ENCODE measurements at regions of chr6 and their contacts with region 1.

Region 1: DNA sequence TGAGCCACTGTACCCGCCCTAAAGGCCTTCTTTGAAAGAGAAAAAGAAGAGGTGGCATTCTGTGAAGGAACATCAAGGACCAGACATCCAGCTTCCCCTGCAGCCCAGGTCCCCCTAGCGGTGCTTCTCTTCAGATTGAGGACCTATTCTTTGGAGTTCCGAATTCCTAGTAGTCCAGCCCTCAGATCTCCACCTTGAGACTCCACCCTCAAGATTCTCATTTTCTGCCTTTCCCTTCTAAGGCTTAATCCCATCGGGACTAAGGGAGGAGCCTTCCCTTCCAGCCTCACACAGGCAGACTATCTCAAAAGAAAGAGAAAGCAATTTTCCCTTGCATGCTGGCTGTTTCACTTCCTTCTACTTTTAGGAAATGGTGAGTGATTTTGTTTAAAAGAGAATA is 32.5 kb downstream of the MUC22 start:
- DNase-seq: peak; percentile 56
- ATAC-seq: peak; percentile 64
- H3K4me3 ChIP-seq: no peak overlapping the region
- H3K27ac ChIP-seq: no peak overlapping the region
- H3K4me1 ChIP-seq: peaks cover 12% of the 10 kb centered on the region
- H3K27me3 ChIP-seq: peaks cover 0 to 26% of the 10 kb centered on the region in 2 experiments; a peak in 3 of 5 replicates
- CTCF ChIP-seq: peak; percentile 75
- EP300 ChIP-seq: no peak
- POLR2A ChIP-seq: no peak
- RAD21 ChIP-seq: 0 out of 2 replicates have a peak, but pooled peaks have one; percentile 48

Region 2: DNA sequence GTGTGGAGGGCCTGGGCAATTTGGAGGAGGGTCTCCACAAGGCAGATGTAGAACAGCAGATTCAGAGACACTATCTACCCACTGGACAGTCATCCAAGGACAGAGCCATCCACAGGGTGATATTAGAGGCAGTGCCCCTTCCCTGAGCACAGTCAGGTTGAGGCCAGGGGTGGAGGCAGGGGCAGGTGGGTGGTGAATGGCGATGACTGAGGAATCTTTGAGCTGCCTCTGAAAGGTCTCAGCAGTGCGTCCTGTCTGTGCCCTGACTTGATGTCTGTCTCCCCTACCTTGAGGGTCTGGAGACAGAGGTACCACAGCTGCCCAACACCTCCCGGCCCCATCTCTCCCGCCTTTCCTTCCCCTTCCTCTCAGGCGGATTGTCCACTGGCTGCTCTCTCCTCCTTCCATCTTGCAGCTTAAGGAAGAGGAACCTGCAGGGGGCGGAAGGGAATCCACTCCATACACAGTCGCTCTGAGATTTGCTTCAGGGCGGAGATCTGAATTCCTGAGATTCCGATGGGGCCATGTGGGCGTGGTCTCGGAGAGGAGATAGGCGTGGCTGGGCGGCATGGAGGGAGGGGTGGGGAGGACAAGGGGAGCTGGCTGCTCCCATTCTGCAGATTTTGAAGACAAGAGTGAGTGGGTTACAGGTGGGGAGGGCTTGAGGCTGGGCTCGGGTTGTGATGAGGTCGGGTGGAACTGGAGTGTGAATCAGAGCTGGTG is 100.3 kb before region 1 on chr6:
- CTCF ChIA-PET with region 1: interaction called, 5 read pairs
- POLR2A ChIA-PET with region 1: no interaction called
- in situ Hi-C with region 1: no loop called
- intact Hi-C with region 1: loop called (anchors 1 kb)
- DNase-seq: peak; percentile 86
- ATAC-seq: peak; percentile 87
- H3K4me3 ChIP-seq: no peak overlapping the region
- H3K27ac ChIP-seq: no peak overlapping the region
- H3K4me1 ChIP-seq: peaks cover 18% of the 10 kb centered on the region
- H3K27me3 ChIP-seq: peaks cover 2 to 39% of the 10 kb centered on the region in 2 experiments
- CTCF ChIP-seq: peak; percentile 85
- EP300 ChIP-seq: no peak
- POLR2A ChIP-seq: no peak
- RAD21 ChIP-seq: peak; percentile 50; the same call in 1 of the 2 replicates

Region 3: GRCh38 chr6:31114970-31115849 is 72.4 kb after region 1 on chr6:
- CTCF ChIA-PET with region 1: no interaction called
- POLR2A ChIA-PET with region 1: no interaction called
- in situ Hi-C with region 1: no loop called
- intact Hi-C with region 1: no loop called
- DNase-seq: peak; percentile 25
- ATAC-seq: peak; percentile 20; the same call in 2 of the 3 replicates
- H3K4me3 ChIP-seq: no peak overlapping the region; a peak in 1 of 6 replicates
- H3K27ac ChIP-seq: no peak overlapping the region
- H3K4me1 ChIP-seq: peaks cover 9% of the 10 kb centered on the region; the same call in 1 of the 2 replicates
- H3K27me3 ChIP-seq: peaks cover 5 to 83% of the 10 kb centered on the region in 2 experiments; a peak in 4 of 5 replicates
- CTCF ChIP-seq: peak; percentile 21; the same call in 1 of the 2 replicates
- EP300 ChIP-seq: no peak
- POLR2A ChIP-seq: no peak
- RAD21 ChIP-seq: no peak